AG04450 (cell line): ENCODE measurements at regions of chr11 and their contacts with region 1.

Region 1: DNA sequence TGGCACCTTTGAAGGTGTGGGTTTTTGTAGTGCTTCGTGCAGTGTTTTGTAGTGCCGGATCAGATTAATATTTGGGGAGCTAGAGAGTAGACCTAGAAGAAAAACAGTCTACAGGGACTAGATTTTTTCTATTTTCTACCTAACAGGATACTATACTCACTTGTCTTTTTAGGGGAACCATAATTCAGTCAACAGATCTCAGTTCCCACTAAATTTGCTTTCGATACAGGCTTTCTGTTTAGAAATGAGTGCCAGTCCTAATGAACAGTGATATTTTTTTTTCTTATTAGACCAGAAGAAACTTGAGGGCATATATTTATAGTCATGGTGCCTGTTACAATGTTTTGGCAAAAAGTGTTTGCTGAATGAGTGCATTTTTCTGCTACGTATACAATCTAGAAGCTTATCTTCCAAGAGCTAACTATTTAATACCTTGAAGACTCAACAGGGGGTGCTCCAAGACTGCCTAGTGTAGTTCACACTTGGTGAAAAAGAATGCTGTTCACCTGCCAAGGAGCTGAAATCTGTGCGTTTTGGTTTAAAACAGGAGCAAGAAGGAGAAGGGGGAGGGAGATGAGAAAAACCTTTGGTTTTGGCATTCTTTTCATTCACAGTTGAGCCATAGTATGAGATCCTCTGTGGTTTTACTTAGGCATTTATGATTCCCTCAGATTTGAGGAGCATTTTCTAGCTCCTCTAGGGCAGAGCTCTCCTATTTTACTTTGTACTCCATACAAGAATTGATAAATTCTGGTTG is 44.9 kb upstream of the VSTM5 start:
- DNase-seq: peak; percentile 69
- H3K4me3 ChIP-seq: no peak overlapping the region; the same call in 1 of the 2 replicates
- H3K27ac ChIP-seq: no peak overlapping the region
- H3K27me3 ChIP-seq: peaks cover 7% of the 10 kb centered on the region
- CTCF ChIP-seq: peak; percentile 89

Region 2: DNA sequence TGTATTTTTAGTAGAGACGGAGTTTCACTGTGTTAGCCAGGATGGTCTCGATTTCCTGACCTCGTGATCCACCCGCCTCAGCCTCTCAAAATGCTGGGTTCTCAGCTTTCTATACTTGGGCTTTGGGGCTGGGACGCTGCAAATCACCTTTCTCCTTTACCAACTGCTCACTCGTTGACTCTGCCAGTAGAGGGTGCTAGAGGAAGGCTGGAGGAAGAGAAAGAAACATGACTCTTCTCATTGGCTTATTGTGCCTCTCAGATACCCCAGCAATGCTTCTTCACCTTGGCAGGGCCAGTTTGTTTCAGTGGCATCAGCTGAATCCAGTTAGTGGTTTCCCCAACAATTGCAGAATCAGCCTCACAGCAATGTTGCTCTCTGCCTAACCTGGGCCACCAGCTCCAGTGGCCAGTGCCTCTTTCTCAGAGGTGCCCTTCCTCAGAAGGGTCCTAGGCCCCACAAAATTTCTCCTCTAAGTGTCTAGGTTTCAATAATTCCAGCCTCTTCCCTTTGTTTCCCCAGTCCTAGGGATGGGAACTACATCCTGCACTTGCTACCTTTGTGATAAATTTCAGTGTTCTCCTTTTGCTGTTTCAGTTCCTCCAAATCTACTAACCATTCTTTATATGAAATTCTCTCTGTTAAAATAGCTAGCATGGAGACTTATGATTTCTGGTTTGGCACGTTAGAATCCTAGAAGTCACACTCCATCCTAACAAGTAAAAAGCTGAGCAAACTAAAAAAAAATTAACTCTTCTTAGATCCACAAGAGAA is 26.6 kb after region 1 on chr11:
- CTCF ChIA-PET with region 1: interaction called, 29 read pairs
- POLR2A ChIA-PET with region 1: no interaction called
- DNase-seq: peak; percentile 21
- H3K4me3 ChIP-seq: no peak overlapping the region
- H3K27ac ChIP-seq: no peak overlapping the region
- H3K27me3 ChIP-seq: no peaks in the 10 kb centered on the region
- CTCF ChIP-seq: peak; percentile 88

Region 3: DNA sequence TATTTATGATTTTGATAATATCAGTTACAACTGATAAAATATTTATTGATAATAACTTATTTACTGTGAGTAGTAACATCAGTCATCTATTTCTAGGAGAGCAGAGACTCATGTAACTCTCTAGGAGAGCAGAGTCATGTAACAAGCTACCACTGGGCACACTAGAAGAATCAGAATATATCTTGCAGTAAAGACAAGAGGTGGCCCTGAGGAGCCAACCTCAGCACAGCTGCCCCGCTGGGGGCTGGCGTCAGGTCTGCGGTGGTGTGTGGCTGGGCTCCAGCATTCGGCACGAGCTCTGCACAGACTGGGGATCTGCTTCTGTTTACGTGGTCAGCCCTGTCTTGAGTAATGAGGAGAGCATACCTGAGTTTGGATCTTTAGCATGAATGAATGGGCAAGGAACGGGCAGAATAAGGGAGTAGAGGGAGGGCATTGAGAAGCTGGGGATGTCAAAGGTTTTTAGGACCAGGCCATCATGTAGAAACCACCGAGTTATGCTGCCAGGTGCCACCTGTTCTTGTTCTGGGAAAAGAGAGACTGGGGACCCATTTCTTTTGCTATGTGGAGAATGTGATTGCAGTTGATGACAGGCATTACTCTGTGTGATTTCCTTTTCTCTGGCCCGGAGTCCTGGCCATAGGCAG is 74.8 kb after region 1 on chr11:
- CTCF ChIA-PET with region 1: no interaction called
- POLR2A ChIA-PET with region 1: no interaction called
- DNase-seq: no peak
- H3K4me3 ChIP-seq: no peak overlapping the region
- H3K27ac ChIP-seq: no peak overlapping the region
- H3K27me3 ChIP-seq: peaks cover 8% of the 10 kb centered on the region
- CTCF ChIP-seq: no peak

Region 4: DNA sequence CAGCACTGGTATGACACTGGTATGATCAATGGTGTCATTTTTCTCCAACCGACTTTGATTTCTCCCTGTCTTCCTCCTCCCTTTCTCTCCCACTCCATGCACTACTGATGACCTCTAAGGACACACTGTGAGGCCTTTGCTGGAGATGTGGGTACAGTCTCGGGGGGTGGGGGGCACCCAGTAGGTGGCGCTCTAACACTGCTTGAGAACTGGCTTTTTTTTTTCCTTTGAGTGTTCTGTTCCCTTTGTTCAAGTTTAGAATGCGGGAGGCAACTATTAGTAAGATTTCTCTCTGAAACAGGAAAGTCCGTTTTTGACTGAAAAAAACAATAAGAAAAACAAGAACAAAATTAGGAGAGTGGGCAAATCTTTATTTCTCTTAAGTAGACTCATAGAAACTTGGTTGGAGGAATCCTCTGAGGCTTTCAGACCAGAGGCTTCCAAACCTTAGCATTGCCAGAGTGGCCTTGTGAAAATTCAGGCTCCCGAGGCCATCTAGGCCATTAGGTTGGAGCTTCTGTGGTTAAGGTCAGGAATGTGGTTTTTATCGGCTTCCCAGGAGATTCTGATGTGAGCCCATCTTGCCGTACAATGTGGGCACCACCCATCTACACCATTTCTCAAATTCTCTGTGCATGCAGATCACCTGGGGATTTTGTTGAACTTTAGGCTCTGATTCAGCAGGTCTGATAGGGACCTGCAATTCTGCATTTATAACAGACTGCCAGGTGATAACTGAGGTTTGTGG is 276.6 kb after region 1 on chr11:
- CTCF ChIA-PET with region 1: interaction called, 13 read pairs
- POLR2A ChIA-PET with region 1: no interaction called
- DNase-seq: no peak
- H3K4me3 ChIP-seq: no peak overlapping the region
- H3K27ac ChIP-seq: no peak overlapping the region
- H3K27me3 ChIP-seq: no peaks in the 10 kb centered on the region
- CTCF ChIP-seq: peak; percentile 89

Region 5: DNA sequence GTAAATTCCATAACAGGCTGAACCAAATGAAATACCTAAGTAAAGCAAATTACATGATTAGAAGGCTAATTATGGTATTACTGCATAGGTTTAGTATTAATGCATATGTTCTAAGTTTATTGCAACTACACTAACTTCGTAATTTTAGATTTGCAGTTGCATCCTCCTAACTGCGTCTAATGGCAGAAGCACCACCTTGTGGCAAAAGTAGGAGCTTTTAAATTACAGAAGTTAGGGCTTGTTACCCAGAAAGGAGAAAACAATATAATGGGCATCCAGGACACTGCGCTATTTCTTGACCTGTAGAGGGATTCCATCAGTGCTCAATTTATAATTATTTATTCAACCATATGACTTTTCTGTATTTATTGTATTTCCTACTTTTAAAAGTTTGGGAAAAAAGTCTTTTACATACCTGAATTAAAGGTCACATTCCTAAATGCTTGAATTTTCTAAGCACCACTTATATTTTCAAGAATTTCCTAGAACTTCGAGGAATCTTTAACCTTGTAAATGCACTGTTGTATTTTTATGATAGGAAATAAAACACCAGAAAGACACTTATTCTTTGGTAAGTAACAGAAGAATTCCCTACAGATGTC is 522.2 kb after region 1 on chr11:
- CTCF ChIA-PET with region 1: interaction called, 102 read pairs
- POLR2A ChIA-PET with region 1: no interaction called
- DNase-seq: peak; percentile 38
- H3K4me3 ChIP-seq: no peak overlapping the region
- H3K27ac ChIP-seq: no peak overlapping the region
- H3K27me3 ChIP-seq: no peaks in the 10 kb centered on the region
- CTCF ChIP-seq: peak; percentile 77

Region 6: DNA sequence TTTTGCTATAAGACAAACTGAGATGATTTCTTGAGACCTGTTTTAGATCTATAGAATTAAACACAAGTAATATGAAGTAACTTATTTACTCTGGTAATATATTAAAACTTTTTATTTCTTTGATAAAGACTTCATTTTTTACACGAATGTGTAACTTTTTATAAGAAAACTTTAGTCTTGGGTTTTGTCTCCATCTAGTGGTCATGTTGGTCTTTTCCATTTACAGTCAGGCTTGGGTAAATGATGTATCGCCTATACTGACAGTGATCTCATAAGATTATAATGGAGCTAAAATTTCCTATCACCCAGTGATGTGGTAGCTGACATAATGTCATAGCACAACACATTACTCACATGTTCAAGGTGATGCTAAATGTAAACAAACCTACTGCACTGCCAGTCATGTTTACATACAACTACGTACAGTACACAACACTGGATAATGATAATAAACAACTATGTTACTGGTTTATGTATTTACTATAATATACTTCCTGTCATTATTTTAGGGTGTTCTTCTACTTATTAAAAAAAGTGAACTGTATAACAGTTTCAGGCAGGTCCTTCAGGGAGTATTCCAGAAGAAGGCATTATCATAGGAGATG is 609.5 kb after region 1 on chr11:
- CTCF ChIA-PET with region 1: interaction called, 79 read pairs
- POLR2A ChIA-PET with region 1: no interaction called
- DNase-seq: peak; percentile 34
- H3K4me3 ChIP-seq: no peak overlapping the region
- H3K27ac ChIP-seq: no peak overlapping the region
- H3K27me3 ChIP-seq: no peaks in the 10 kb centered on the region
- CTCF ChIP-seq: peak; percentile 71